ENCODE measurements at regions of chr2 and their contacts with region 1.

Region 1: GRCh38 chr2:7392076-7392787 is 475.0 kb downstream of the RNF144A start:
- DNase-seq: peak; percentile 48
- H3K4me3 Mint-ChIP-seq: no peak overlapping the region
- H3K27ac Mint-ChIP-seq: no peak overlapping the region
- H3K4me1 Mint-ChIP-seq: no peaks in the 10 kb centered on the region
- H3K27me3 Mint-ChIP-seq: peaks cover 11% of the 10 kb centered on the region

Region 2: GRCh38 chr2:7118606-7119503 is 273.4 kb before region 1 on chr2:
- intact Hi-C with region 1: loop called (anchors 10 kb)
- DNase-seq: peak; percentile 75
- H3K4me3 Mint-ChIP-seq: no peak overlapping the region
- H3K27ac Mint-ChIP-seq: no peak overlapping the region
- H3K4me1 Mint-ChIP-seq: peaks cover 1% of the 10 kb centered on the region
- H3K27me3 Mint-ChIP-seq: peaks cover 1% of the 10 kb centered on the region

Region 3: DNA sequence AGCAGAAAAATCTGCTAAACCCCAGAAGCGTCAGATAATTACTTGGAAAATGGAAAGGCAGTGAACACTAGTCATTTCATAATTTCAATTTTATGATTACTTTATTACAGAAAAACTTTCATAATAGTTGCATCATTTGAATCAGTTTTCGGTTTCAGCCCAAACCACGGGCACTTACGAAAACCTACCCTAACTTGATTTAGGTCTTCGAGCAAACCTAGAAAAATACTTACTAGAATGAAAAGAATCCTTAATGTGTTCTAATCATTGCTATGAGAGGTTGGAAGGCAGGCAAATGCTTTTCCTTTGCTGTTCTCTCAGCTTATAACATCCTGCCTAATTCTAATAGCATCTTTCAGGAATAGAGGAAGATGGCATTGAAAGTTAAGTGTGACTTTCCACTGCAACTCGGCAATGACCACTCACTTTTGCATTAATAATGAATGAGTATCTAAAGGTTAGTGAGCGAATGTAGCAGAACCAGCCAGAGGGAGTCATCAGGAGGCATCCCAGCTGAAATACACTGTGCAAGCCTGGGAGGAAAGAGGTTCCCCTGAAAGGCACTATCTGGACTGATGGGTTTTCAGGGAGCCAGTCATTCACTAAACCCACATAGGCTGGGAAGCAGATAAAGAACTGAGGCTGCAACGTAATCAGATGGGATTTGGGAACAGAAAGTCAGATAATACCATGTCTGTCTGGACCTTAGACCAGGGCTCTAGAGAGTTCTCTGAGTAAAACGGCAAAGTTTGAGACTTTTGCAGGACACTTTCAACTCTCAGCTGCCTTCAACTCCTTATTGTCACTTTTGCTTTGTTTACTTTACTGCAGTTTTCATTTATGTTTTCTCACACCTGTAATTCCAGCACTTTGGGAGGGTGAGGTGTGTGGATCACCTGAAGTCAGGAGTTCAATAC is 45.7 kb after region 1 on chr2:
- intact Hi-C with region 1: no loop called
- DNase-seq: peak; percentile 75
- H3K4me3 Mint-ChIP-seq: peak overlapping the region; percentile 53
- H3K27ac Mint-ChIP-seq: peak overlapping the region; percentile 96
- H3K4me1 Mint-ChIP-seq: peaks cover 65% of the 10 kb centered on the region
- H3K27me3 Mint-ChIP-seq: no peaks in the 10 kb centered on the region

Measured in activated CD4-positive, alpha-beta T cell treated with anti-CD3 and anti-CD28 coated beads, Interleukin-2, amount 10 ng/mL, durations not matched to agents 24 days and 14 days (primary cell).